ENCODE measurements at regions of chr20 and their contacts with region 1.

Region 1: DNA sequence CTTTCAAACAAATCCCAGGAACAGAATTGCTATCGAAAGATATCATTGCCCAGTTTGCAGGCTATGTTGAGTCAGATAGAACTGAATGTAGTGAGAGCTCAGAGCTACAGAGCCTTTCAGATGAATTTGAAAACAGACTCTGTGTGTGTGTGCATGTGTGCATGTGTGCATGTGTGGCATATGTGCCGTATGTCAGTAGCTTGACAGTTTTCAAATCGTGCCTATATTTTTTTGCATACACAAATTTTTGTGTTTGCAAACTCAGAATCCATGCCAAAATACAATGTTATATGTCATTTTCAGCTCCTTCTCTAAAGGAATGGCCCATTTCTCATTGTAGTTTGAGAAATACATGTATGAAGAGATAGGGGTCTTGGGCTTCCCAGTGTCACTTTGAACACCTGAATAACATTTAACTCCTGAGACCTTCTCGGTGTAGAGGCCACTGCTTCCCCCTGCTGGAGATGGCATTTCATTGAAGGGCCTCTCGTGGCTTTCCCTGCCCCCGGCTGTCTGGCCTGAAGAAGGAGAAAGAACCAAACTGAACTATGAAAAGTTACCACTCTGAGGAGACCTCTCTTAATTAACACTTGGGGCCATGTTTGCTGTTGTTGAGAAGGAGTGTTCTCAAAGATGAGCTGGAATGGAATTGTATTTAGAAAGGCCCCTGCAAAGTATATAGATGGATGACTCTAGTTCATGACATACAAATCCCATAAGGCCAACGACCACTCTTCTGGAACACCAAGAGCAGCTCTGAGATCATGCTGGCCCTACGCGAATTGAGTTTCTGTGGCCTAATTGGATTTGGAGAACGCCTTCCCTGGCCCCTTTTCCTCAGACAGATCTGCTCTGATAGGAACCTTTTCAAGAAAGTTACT is 58.7 kb downstream of the VAPB start:
- DNase-seq: peak; percentile 74
- H3K4me3 Mint-ChIP-seq: no peak overlapping the region
- H3K27ac Mint-ChIP-seq: no peak overlapping the region
- H3K4me1 Mint-ChIP-seq: no peaks in the 10 kb centered on the region
- H3K27me3 Mint-ChIP-seq: no peaks in the 10 kb centered on the region

Region 2: DNA sequence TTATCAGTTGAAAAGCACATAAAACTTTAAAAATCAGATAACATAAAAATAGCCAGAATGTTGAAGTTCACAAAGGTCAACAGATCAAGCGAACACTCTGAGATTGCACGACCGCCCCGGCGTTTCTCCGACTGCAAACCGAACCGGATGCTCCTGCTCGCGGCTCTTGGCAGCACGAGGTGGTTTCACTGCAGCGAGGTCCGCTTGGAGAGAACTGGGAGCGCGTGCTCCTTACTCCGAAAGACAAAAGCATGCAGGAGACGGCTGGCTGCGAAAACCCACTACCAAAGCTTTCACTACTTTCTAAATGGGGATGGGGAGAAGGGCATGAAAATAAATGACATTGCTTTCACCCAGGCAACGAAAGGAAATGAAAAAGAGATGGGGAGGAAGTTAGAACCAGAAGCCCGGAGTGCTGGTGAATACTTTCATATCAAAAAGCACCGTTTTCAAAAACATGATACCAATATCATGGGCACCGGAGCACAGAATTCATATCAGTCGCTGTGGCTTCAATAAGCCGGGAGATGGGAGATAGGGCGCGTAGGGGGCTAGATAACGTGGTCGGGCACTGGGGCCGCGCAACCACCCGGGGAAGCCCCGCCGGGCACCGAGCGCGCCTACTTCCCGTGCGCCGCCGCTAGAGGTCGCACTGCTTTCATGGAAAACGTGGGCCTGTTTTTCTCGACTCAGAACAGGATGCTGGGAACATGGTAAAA is 211.0 kb before region 1 on chr20:
- CTCF ChIA-PET with region 1: interaction called, 11 read pairs
- DNase-seq: peak; percentile 86
- H3K4me3 Mint-ChIP-seq: peak overlapping the region; percentile 87
- H3K27ac Mint-ChIP-seq: peak overlapping the region; percentile 77
- H3K4me1 Mint-ChIP-seq: peaks cover 31% of the 10 kb centered on the region
- H3K27me3 Mint-ChIP-seq: no peaks in the 10 kb centered on the region

Region 3: GRCh38 chr20:58485393-58485792 is 37.6 kb after region 1 on chr20:
- CTCF ChIA-PET with region 1: no interaction called
- DNase-seq: no peak
- H3K4me3 Mint-ChIP-seq: no peak overlapping the region
- H3K27ac Mint-ChIP-seq: no peak overlapping the region
- H3K4me1 Mint-ChIP-seq: peaks cover 3% of the 10 kb centered on the region
- H3K27me3 Mint-ChIP-seq: peaks cover 32% of the 10 kb centered on the region